ENCODE measurements at regions of chr2 and their contacts with region 1.

Region 1: DNA sequence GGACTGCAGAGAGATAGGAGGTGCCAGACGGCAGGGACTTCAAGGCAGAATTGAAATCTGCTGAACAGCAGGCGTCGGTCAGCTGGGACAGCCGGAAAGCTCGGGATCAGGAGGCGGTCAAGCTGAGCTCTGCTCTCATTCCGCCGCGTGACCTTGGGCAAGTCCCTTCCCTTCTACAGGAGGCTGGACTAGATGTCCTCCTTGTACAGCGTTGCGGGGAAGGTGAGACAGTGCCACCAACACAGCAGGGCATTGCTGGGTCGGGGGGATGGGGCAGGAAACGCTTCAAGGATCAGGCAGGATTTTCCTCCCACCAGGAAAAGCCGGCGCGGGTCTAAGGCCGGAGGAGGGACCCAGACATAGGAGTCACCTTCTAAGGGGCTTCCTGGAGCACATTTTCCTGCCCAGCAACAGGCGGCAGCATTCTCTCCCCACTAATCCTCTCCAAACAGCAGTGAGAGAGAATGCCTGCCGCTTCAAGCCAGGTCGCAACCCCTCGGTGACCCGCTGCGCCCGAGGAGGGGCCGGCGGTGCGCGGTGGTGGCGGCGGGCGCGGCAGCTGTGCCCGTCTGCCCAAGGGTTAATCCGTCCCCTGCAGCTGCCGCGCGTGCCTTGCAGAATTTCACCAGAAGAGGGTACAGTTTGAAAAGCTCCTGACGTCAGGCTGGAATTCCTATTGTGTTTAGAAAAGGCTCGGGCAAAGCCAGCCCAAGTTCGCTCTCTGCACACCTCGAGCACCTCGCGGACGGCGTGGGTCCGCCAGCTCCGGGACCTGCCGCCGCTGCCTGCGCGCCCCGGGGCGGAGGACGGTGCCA is at the start of gene KCNF1:
- DNase-seq: peak in 17 of 42 donors; percentile 19 to 78 (median 57)

Region 2: GRCh38 chr2:10832203-10832936 is 79.1 kb before region 1 on chr2:
- intact Hi-C with region 1: loop called (anchors 5 kb)
- DNase-seq: peak; percentile 76 to 94 (median 88)

Measured in head of caudate nucleus (tissue), 42 donors.